ENCODE measurements at regions of chr9 and their contacts with region 1.

Region 1: DNA sequence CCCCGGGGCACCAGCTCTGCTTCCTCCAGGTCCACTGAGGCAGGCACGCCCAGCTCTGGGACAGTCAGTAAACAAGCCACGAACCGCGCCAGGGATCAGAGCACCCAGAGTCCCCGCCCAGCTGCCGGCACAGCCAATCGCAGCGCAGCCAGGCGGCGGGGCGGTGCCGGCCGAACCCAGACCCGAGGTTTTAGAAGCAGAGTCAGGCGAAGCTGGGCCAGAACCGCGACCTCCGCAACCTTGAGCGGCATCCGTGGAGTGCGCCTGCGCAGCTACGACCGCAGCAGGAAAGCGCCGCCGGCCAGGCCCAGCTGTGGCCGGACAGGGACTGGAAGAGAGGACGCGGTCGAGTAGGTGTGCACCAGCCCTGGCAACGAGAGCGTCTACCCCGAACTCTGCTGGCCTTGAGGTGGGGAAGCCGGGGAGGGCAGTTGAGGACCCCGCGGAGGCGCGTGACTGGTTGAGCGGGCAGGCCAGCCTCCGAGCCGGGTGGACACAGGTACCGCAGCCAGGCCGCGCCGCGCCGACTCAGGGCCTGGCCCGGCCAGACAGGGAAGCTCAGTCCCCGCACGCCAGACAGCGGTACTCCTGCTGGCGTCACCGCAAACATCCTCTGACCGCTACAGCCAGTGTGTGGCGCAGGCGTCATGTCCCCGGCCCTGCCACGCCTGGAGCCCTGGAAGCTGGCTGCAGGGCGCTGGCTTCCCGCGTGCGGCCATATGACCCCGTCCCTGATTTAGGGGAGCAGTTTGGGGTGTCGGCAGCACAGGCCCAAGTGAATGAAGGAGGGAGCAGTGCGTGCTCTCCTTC is at the start of gene CTSL:
- H3K4me3 Mint-ChIP-seq: peak within 1 kb of the TSS; percentile 97
- H3K27ac Mint-ChIP-seq: peak within 1 kb of the TSS; percentile 99
- H3K4me1 Mint-ChIP-seq: peaks cover 76% of the 10 kb centered on the region
- H3K27me3 Mint-ChIP-seq: peaks cover 12% of the 10 kb centered on the region

Region 2: DNA sequence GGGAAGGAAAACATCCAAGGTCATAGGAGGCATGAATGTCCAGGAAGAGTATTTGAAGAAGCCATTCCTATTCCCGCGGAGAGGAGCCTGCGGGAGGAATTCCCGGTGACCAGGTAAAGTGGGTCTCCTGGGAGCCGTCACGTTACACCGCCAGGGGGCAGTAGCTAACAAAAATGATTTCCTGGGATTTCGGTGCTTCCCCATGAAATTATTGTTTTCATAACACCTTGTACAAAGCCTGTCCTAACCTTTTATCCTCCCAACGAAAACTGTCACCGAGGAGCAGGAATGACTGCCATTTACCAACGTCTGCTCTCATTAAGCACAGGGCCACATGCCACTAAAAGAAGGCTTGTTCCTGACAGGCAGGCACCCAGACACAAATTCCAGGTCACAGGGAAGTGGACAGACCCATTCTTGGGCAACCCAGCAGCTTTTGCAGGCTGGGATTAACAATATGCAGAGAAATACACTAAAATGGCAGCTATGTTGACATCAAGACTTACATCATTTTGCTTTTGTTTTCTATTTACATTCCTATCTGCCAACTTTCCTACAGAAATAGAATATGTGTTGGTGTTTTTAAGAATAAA is 41.4 kb before region 1 on chr9:
- intact Hi-C with region 1: loop called (anchors 5 kb)
- H3K4me3 Mint-ChIP-seq: no peak overlapping the region
- H3K27ac Mint-ChIP-seq: peak overlapping the region; percentile 84
- H3K4me1 Mint-ChIP-seq: peaks cover 41% of the 10 kb centered on the region
- H3K27me3 Mint-ChIP-seq: peaks cover 2% of the 10 kb centered on the region

Region 3: DNA sequence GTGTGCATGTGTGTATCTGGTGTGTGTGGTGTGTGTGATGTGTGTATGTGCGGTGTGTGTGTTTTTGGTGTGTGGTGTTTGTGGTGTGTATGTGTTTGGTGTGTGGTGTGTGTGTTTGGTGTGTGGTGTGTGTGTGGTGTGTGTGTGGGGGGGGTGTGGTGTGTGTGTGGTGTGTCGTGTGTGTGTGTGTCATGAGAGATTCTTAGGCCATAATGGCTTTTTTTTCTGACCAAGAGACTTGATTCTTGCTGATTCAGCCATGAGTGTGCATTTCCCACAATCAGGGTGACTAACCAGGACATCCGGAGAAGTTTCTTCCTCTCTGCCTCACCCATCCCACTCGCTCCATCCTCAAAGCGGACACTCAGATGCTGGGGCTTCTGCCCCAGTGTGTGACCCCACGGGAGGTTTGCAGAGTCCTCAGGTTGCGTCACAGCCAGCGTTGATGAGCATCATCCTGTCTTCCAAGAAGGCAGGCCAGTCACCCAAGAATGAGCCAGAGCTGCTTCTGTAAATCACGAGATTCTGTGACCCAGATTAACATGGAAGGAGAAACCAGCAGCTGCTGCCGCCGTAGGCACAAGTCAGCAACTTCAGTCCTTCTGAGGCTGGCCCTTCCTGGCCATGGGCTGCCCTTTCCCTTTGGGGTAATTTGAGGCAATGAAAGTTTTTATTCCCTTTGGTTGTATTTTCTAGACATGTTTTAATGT is 12.7 kb before region 1 on chr9:
- intact Hi-C with region 1: loop called (anchors 1 kb)
- H3K4me3 Mint-ChIP-seq: peak overlapping the region; percentile 64
- H3K27ac Mint-ChIP-seq: peak overlapping the region; percentile 91
- H3K4me1 Mint-ChIP-seq: peaks cover 68% of the 10 kb centered on the region
- H3K27me3 Mint-ChIP-seq: peaks cover 8% of the 10 kb centered on the region

Region 4: GRCh38 chr9:87792831-87793288 is 66.8 kb after region 1 on chr9:
- intact Hi-C with region 1: loop called (anchors 2 kb)
- H3K4me3 Mint-ChIP-seq: peak overlapping the region; percentile 49
- H3K27ac Mint-ChIP-seq: peak overlapping the region; percentile 86
- H3K4me1 Mint-ChIP-seq: peaks cover 64% of the 10 kb centered on the region
- H3K27me3 Mint-ChIP-seq: no peaks in the 10 kb centered on the region

Measured in dendritic cell treated with granulocyte-macrophage colony-stimulating factor and Interleukin-4, amounts not matched to agents 40 ng/mL and 50 ng/mL, for 4 days (primary cell).